Activated CD4-positive, alpha-beta memory T cell treated with anti-CD3 and anti-CD28 coated beads for 36 hours (primary cell): ENCODE measurements at regions of chr1 and their contacts with region 1.

Region 1: GRCh38 chr1:27525296-27526272 is 35.6 kb upstream of the WASF2 start:
- DNase-seq: peak; percentile 80
- H3K4me3 Mint-ChIP-seq: peak overlapping the region; percentile 62
- H3K27ac Mint-ChIP-seq: peak overlapping the region; percentile 7
- H3K4me1 Mint-ChIP-seq: peaks cover 57% of the 10 kb centered on the region
- H3K27me3 Mint-ChIP-seq: no peaks in the 10 kb centered on the region

Region 2: DNA sequence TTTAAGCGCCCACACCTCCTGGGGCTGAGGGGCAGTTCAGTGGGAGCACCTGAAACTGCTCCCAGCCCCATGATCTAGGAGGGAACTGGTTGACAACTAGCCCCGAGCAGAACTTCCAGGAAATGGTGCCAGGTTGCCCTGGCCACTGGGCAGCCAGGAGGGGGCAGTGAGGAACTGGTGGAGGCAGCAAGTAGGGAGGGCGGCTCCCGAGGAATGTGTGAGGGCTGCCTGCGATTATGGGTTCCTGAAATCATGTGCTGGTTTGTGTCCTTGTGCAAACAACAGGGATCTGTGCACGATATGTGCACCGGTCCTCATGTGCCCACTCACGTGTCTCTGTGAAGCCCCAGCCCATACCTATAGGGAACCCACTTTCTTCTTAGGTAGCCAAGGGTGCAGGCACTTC is 123.2 kb before region 1 on chr1:
- CTCF ChIA-PET with region 1: no interaction called
- POLR2A ChIA-PET with region 1: interaction called, 5 read pairs
- intact Hi-C with region 1: loop called (anchors 5 kb)
- DNase-seq: peak; percentile 43
- H3K4me3 Mint-ChIP-seq: no peak overlapping the region
- H3K27ac Mint-ChIP-seq: peak overlapping the region; percentile 33
- H3K4me1 Mint-ChIP-seq: peaks cover 7% of the 10 kb centered on the region
- H3K27me3 Mint-ChIP-seq: no peaks in the 10 kb centered on the region

Region 3: DNA sequence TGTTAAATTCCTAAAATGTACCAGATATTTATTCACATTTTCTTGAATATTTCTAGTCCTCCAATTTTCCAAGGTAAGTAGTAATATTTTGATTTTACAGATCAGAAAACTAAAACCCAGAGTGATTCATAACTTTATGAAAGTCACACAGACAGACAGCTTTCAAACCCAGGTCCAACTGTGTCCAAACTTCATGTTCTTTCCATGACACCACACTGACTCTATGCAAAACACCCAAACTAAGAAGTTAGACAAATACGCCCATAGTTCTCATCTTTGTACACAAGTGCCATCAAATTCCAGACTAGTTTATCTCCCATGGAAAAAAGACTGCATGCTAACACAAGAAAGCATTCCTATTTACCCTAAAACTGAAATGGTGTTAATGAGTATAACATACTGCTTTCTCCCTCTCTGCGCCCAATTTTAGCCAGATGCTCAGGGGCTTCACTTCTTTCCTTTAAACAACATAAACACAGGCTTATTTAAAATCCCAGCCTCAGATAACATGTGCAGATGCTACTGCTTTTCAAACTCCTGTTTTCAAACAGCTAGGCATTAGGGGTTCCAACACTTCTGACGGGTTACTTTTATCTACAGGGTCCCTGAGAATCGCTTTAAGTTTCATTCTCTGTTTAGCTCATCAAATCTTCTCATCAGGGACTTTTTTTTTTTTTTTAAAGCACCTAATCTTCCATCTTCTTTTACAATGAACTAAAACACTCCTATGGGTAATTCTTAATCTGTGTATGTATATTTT is 80.2 kb before region 1 on chr1:
- CTCF ChIA-PET with region 1: interaction called, 3 read pairs
- POLR2A ChIA-PET with region 1: interaction called, 5 read pairs
- intact Hi-C with region 1: loop called (anchors 2 kb)
- DNase-seq: no peak
- H3K4me3 Mint-ChIP-seq: peak overlapping the region; percentile 52
- H3K27ac Mint-ChIP-seq: peak overlapping the region; percentile 88
- H3K4me1 Mint-ChIP-seq: peaks cover 54% of the 10 kb centered on the region
- H3K27me3 Mint-ChIP-seq: no peaks in the 10 kb centered on the region

Region 4: GRCh38 chr1:27481994-27482620 is 43.5 kb before region 1 on chr1:
- CTCF ChIA-PET with region 1: interaction called, 4 read pairs
- POLR2A ChIA-PET with region 1: no interaction called
- intact Hi-C with region 1: loop called (anchors 5 kb)
- DNase-seq: no peak
- H3K4me3 Mint-ChIP-seq: no peak overlapping the region
- H3K27ac Mint-ChIP-seq: peak overlapping the region; percentile 76
- H3K4me1 Mint-ChIP-seq: peaks cover 52% of the 10 kb centered on the region
- H3K27me3 Mint-ChIP-seq: no peaks in the 10 kb centered on the region

Region 5: DNA sequence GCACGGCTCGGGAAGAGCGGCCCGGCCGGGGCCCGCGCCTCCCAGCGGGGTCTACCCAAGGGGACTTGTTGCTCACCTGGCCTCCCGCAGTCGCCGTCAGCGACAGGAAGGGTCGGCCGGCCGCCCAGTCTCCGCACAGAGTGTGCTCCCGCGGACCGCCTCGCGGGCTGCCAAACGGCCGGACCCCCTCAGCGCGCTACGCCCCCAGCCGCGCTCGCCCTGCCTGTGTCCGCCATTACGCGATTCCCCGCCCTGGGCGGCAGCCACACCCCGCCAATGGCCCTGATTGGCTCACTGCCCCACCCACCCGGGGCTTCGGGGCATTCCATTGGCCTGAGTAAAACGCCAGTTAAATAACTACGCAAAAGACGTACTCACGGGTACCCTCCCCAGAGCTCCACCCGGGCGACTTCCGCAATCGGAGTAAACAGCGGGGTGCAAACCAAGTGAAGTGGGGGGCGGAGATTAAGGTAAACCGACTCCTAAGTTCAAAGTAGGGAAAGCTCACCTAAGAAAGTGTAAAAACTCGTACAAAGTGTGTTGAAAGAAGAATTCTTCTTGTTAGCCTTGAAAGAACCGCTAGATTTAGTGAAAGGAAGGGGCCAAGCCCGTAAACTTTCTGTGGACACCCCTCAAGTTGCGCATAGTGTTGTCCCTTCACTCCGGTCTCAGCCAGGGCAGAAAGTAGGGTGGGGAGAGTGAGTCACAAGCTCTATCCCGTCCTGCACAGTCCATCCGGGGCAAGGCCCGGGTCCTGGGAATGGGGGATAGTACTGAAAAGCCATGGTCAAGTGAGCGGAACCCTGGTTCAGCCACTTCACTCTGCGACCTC is 35.5 kb before region 1 on chr1 and contains the start of gene WASF2:
- CTCF ChIA-PET with region 1: no interaction called
- POLR2A ChIA-PET with region 1: interaction called, 21 read pairs
- intact Hi-C with region 1: loop called (anchors 1 kb)
- DNase-seq: peak; percentile 98
- H3K4me3 Mint-ChIP-seq: peak within 1 kb of the TSS; percentile 96
- H3K27ac Mint-ChIP-seq: peak within 1 kb of the TSS; percentile 99
- H3K4me1 Mint-ChIP-seq: peaks cover 28% of the 10 kb centered on the region
- H3K27me3 Mint-ChIP-seq: no peaks in the 10 kb centered on the region
- total RNA-seq, gene WASF2: 109 to 110 TPM